PC-9 (cell line): ENCODE measurements at regions of chr4 and their contacts with region 1.

Region 1: DNA sequence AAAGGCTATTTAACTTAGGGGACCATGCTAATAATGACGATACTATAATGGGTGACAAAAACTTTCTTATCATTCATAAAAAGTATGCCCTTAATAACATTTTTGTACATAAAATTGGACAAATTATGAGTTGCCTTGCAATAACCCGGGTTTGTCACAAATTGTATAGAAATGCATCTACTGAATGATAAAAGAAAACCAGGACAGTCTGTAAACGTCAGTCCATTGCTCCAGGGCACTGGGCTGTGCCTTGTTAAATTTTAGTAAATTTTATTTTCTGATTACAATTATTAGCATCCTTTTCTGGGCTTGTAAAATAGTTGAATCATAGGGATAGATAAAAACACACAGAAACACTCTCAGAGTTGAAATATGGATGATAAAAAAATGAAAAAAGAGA is 778.3 kb downstream of the RAPGEF2 start:
- DNase-seq: no peak
- H3K4me3 ChIP-seq: no peak overlapping the region
- H3K27ac ChIP-seq: no peak overlapping the region
- H3K4me1 ChIP-seq: no peaks in the 10 kb centered on the region
- H3K27me3 ChIP-seq: no peaks in the 10 kb centered on the region
- CTCF ChIP-seq: no peak

Region 2: DNA sequence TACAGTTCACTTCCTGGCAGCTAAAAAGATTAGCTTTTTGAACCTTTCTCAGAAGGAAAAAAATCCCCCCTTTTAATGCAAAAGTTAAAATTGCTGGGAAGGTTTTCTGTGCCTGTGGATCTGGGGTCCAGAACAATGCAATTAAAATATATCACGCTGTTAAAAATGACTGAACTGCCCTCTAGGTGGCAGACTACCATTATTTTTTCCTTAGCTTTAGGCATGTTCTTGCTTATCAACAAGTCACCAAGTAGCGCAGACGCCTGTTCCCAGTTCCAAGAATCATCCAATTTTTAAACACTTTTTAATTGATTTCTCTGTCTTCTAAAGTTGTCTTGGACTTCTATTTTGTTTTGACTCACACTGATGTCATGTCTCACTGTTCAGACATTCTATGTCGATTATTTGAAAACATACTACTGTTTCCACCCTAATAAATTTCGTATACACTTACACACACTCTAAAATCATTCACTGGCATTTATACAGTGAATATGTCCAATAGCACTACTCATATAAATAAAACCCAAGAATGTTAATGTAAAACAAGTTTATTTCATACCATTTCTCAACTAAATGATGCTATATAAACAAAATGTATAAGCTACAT is 116.7 kb before region 1 on chr4:
- CTCF ChIA-PET with region 1: no interaction called
- POLR2A ChIA-PET with region 1: no interaction called
- intact Hi-C with region 1: no loop called
- DNase-seq: peak in 1 of 2 experiments; percentile 11
- H3K4me3 ChIP-seq: no peak overlapping the region
- H3K27ac ChIP-seq: no peak overlapping the region
- H3K4me1 ChIP-seq: no peaks in the 10 kb centered on the region
- H3K27me3 ChIP-seq: no peaks in the 10 kb centered on the region
- CTCF ChIP-seq: peak; percentile 72

Region 3: DNA sequence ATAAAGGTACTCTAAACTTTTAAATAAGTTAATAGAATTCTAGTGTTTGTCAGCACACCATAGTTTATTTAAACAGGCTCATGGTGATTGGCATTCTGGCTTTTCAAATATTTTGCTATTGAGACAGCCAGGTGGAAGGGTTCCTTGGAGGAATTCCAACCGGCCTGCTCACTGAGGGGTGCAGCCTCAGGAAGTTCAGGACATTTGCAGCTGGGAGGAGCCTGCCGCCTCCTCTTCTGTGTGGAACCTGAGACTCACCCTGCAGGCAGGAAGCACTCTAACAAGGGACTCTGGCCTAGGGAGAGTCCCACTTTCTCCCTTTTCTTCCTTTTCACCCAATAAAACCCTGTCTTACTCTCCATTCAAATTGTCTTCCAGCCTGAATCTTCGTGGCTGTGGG is 954.6 kb after region 1 on chr4:
- CTCF ChIA-PET with region 1: no interaction called
- POLR2A ChIA-PET with region 1: interaction called, 11 read pairs
- intact Hi-C with region 1: no loop called
- DNase-seq: peak; percentile 53 to 77
- H3K4me3 ChIP-seq: no peak overlapping the region
- H3K27ac ChIP-seq: 0 out of 2 replicates have a peak overlapping the region, but pooled peaks have one; percentile 9
- H3K4me1 ChIP-seq: peaks cover 12% of the 10 kb centered on the region
- H3K27me3 ChIP-seq: no peaks in the 10 kb centered on the region
- CTCF ChIP-seq: no peak